PC-3 (cell line): ENCODE measurements at regions of chr12 and their contacts with region 1.

Region 1: DNA sequence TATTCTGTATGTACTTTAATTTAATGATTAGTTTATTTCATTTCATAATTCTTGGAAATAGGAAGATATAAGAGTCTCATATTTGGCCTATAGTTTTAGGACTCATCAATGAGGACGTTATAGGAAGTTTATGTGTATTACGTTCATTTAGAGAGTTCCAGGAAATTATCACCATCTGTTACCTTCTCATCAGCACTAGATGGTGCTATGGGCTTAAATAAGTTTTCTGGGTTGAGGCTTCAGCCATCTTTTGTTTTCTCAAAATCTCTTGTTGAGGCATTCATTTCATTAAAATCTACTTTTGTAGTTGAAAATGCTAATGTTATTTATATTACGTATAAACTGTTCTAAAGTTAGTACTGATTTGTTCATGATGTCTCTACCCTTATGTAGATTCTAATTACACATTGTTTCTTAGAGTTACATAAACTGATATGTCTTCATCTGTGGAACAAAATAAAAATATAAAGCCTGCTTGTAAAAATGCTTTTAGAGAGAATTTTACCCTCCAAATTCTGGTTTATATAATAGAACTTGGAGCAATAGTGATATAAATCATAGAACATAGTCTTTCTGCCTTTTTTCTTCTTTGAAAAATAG is 89.2 kb downstream of the CFAP54 start:
- DNase-seq: peak; percentile 80
- ATAC-seq: peak; percentile 79
- H3K4me3 ChIP-seq: no peak overlapping the region
- H3K27ac ChIP-seq: no peak overlapping the region
- H3K4me1 ChIP-seq: no peaks in the 10 kb centered on the region
- H3K27me3 ChIP-seq: no peaks in the 10 kb centered on the region
- CTCF ChIP-seq: peak; percentile 91

Region 2: DNA sequence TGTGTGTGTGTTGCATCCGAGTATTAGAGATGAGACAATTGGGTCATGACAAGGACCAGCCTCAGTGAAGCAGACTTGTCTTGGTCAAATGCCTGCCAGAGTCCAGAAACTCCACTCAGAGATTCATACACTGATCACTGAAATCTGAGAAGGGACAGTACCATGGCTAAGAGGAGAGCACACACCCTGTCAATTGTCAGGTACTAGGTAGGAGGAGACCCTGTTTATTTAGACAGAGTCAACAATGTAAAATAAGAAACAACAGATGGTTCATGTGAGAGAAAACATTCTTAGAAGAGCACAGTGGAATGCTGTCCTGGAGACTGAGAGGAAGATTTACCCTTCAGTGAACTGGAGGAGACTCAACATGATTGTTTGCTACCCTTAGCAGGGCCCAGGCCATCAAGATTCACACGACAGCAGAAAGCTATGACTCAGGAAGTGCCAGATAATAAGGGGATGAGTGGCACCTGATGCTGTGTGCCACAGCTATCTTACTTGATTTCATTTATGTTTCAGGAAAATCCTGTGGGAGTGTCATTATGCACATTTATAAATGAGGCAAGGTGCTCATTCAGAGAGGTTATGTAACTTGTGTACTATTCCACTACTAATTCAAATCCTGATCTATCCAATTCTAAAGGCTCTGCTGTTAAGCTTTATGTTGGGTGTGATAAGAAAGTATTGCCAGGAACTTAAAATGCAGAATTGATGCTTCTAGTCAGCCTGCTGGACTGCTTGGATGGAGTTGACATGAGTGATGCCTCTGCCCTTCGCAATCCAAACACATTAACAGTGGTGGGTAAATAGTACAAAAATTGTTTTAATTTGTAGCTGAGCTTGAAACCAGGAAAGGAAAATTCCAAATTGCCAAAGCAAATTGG is 191.8 kb after region 1 on chr12:
- CTCF ChIA-PET with region 1: no interaction called
- POLR2A ChIA-PET with region 1: no interaction called
- intact Hi-C with region 1: loop called (anchors 5 kb)
- DNase-seq: peak; percentile 64
- ATAC-seq: peak; percentile 58
- H3K4me3 ChIP-seq: no peak overlapping the region
- H3K27ac ChIP-seq: peak overlapping the region; percentile 4
- H3K4me1 ChIP-seq: peaks cover 23% of the 10 kb centered on the region
- H3K27me3 ChIP-seq: no peaks in the 10 kb centered on the region
- CTCF ChIP-seq: no peak

Region 3: GRCh38 chr12:97308576-97309198 is 730.1 kb after region 1 on chr12:
- CTCF ChIA-PET with region 1: no interaction called
- POLR2A ChIA-PET with region 1: no interaction called
- intact Hi-C with region 1: loop called (anchors 1 kb)
- DNase-seq: peak; percentile 65
- ATAC-seq: no peak
- H3K4me3 ChIP-seq: no peak overlapping the region
- H3K27ac ChIP-seq: no peak overlapping the region
- H3K4me1 ChIP-seq: no peaks in the 10 kb centered on the region
- H3K27me3 ChIP-seq: peaks cover 24% of the 10 kb centered on the region; the same call in 1 of the 2 replicates
- CTCF ChIP-seq: peak; percentile 75

Region 4: DNA sequence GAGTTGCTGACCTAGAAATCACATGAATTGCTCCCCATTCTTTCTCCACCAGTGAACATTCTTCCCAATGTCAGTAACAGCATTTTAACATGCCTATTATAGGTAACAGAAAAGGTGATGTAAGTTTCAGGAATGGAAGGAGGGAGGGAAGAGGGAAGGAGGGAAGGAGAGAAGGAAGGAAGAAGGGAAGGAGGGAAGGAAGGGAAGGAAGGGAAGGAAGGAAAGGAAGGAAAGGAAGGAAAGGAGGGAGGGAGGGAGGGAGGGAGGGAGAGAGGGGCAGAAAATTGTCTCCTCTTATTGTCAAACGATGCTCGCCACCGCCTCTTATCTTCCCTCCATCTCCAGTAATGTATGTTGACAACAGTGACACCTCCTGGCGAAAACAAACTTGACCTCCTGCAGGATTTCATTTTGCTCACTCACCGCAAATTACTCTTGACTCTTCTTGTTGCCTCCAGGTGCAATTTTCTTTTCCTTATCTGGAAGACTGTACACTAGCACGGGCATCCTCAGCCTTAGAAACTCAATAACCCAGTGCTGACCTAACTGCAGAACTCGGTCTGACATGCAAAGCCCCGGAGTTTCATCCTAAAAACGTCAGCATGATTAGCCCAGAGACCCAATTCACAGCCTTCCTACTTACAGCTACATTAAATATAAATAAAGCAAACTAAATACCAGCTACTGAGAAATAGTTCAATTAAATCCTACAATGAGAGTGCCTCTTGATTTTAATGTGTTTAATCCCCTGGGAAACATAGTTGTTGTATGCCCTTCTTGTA is 1424.3 kb after region 1 on chr12:
- CTCF ChIA-PET with region 1: no interaction called
- POLR2A ChIA-PET with region 1: no interaction called
- intact Hi-C with region 1: loop called (anchors 2 kb)
- DNase-seq: peak; percentile 77
- ATAC-seq: 0 out of 2 replicates have a peak, but pooled peaks have one; percentile 49
- H3K4me3 ChIP-seq: no peak overlapping the region
- H3K27ac ChIP-seq: no peak overlapping the region
- H3K4me1 ChIP-seq: no peaks in the 10 kb centered on the region
- H3K27me3 ChIP-seq: no peaks in the 10 kb centered on the region
- CTCF ChIP-seq: peak; percentile 60